Uterus (tissue), 4 donors: ENCODE measurements at regions of chr10 and their contacts with region 1.

Region 1: DNA sequence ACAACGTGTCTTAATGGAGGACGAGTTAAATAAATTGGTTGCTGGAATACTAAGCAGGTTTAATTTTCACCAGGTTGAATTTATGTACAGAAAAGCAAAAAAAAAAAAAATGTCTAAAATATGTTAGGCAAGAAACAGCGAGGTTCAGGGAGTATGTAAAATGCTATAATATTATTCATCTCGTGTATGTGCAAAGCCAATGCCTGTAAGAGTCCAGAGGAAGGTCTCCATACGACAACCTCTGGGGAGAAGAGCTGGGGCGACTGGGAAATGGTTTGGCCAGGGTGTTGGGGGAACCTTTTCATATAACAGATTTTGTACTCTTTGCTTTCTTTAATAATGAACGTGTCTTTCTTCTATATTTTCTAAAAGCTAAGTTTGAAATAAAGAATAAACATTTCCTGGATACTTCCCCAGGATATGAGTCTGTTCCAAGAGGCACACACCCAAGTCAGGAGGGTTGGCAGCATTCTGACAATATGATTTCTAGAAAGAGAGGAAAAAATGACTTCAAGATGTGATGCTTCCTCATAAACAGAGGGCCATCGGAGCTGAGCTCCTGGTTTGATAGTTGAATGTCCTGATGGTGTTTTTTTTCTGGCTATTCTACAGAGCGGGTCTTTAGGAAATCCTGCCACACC is 208.6 kb upstream of the MGMT start:
- DNase-seq: no peak
- H3K4me3 ChIP-seq: no peak overlapping the region
- H3K27ac ChIP-seq: peak overlapping the region; percentile 30 to 62
- H3K4me1 ChIP-seq: no peaks in the 10 kb centered on the region
- H3K27me3 ChIP-seq: no peaks in the 10 kb centered on the region
- CTCF ChIP-seq: no peak
- POLR2A ChIP-seq: no peak

Region 2: DNA sequence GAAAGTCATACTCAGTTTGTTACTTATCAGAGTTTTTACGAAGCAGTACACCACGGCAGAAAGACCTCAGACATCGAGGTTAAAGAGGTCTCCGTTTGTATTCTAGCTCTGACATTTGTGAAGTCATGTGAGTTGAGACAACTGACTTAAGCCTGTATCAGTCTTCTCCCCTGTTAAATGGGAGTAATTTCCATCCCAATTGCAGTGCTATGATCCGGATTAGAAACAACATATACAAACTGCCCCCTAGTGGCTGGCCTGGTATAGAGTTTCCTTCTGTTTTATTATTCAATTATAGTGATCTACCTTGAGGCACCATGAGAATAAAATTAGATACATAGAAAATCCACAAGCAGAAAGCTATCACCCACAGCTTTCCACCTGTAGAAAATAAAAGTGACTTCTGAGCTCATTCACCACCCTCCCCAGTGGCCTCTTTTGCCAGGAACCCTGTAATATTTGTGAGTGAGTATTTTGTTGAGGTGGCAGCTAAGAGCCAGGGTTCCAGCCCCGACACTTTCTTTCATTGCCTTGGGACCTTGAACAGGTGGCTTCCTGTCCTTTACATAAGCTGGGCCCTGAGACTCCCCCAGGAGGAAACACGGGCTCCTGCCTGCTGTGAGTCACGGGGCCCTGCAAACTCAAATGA is 398.5 kb before region 1 on chr10:
- intact Hi-C with region 1: loop called (anchors 10 kb)
- DNase-seq: no peak
- H3K4me3 ChIP-seq: no peak overlapping the region
- H3K27ac ChIP-seq: no peak overlapping the region
- H3K4me1 ChIP-seq: no peaks in the 10 kb centered on the region
- H3K27me3 ChIP-seq: no peaks in the 10 kb centered on the region
- CTCF ChIP-seq: peak; percentile 14 to 33 (median 26)
- POLR2A ChIP-seq: no peak